GM12878 (cell line): ENCODE measurements at regions of chr18 and their contacts with region 1.

Region 1: DNA sequence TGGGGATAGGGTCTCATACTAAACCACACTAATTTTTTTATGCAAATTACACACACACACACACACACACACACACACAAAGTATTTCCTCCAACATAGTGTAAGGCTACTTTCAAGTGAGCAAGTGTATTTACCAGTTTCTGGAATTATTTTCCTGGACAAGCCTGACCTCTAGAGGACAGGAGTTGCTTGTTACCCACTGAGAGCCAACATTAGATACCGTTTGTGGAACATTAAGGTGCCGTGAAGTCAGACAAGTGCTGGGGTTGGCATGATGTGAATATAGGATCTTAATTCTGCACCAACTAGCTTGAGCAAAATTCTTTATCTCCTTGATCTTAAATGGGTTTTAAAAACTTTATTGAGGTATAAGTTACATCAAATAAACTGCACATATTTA is 39.3 kb upstream of the SERPINB2 start:
- DNase-seq: no peak
- ATAC-seq: peak; percentile 71
- H3K4me3 ChIP-seq: no peak overlapping the region
- H3K27ac ChIP-seq: no peak overlapping the region
- H3K4me1 ChIP-seq: no peaks in the 10 kb centered on the region
- H3K27me3 ChIP-seq: peaks cover 0 to 4% of the 10 kb centered on the region in 2 experiments; a peak in 2 of 4 replicates
- CTCF ChIP-seq: peak; percentile 54 to 64 (median 57); a peak in 5 of 6 replicates
- EP300 ChIP-seq: no peak
- POLR2A ChIP-seq: no peak
- RAD21 ChIP-seq: peak; percentile 73

Region 2: DNA sequence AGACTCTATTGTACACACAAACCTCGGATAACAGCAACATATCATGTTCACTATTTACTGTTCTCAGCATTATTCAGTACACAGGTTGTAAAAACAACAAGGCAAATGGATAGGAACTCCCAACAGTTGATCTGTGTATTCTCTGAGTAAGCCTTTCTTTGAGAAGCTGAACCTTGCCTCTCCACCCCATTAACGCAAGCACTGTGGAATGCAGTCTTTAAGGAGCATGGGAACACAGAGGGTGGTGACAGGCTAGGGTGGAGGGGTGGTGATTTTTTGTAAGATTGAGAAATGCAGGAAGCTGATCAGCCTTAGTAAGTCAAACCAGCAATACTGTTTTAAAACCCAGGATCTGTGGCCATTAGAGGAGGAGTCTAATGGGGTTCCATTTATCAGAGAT is 165.0 kb before region 1 on chr18:
- CTCF ChIA-PET with region 1: no interaction called
- POLR2A ChIA-PET with region 1: no interaction called
- RAD21 ChIA-PET with region 1: no interaction called
- SMC1A ChIA-PET with region 1: no interaction called
- in situ Hi-C with region 1: no loop called
- intact Hi-C with region 1: loop called (anchors 10 kb)
- DNase-seq: no peak
- ATAC-seq: no peak
- H3K4me3 ChIP-seq: no peak overlapping the region
- H3K27ac ChIP-seq: no peak overlapping the region
- H3K4me1 ChIP-seq: no peaks in the 10 kb centered on the region
- H3K27me3 ChIP-seq: no peaks in the 10 kb centered on the region
- CTCF ChIP-seq: no peak
- EP300 ChIP-seq: no peak
- POLR2A ChIP-seq: no peak
- RAD21 ChIP-seq: no peak

Region 3: GRCh38 chr18:64017870-64018269 is 169.7 kb after region 1 on chr18:
- CTCF ChIA-PET with region 1: no interaction called
- POLR2A ChIA-PET with region 1: no interaction called
- RAD21 ChIA-PET with region 1: no interaction called
- SMC1A ChIA-PET with region 1: no interaction called
- in situ Hi-C with region 1: no loop called
- intact Hi-C with region 1: no loop called
- DNase-seq: no peak
- ATAC-seq: peak; percentile 68
- H3K4me3 ChIP-seq: no peak overlapping the region
- H3K27ac ChIP-seq: no peak overlapping the region
- H3K4me1 ChIP-seq: no peaks in the 10 kb centered on the region
- H3K27me3 ChIP-seq: no peaks in the 10 kb centered on the region; a peak in 1 of 4 replicates
- CTCF ChIP-seq: peak; percentile 32 to 60 (median 45); a peak in 5 of 6 replicates
- EP300 ChIP-seq: no peak
- POLR2A ChIP-seq: no peak
- RAD21 ChIP-seq: peak; percentile 78